ENCODE measurements at regions of chr3 and their contacts with region 1.

Region 1: DNA sequence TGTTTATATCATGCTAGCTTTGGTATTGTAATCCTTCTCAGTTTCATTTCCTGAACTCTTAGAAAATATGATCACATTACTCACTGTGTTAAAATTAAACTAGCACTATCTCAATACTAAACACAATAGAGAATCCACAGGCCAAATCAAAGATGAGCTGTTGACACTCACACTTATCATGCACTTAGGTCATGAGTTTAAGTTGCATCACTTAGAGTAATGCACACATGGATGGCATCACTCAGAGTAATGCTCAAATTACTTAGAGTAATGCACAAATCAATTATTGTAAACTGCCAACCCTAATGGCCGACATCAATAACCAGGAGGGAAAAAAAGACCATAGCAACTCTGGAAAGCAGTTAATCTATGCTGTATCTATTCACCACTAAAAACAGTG is 40.0 kb upstream of the MCF2L2 start:
- DNase-seq: no peak
- H3K4me3 ChIP-seq: no peak overlapping the region
- H3K4me3 Mint-ChIP-seq: no peak overlapping the region
- H3K27ac Mint-ChIP-seq: no peak overlapping the region
- H3K4me1 ChIP-seq: peaks cover 21% of the 10 kb centered on the region; the same call in 1 of the 2 replicates
- H3K4me1 Mint-ChIP-seq: peaks cover 14% of the 10 kb centered on the region
- H3K27me3 ChIP-seq: no peaks in the 10 kb centered on the region
- H3K27me3 Mint-ChIP-seq: no peaks in the 10 kb centered on the region
- CTCF ChIP-seq: no peak

Region 2: GRCh38 chr3:183447206-183448001 is 21.0 kb before region 1 on chr3:
- CTCF ChIA-PET with region 1: no interaction called
- POLR2A ChIA-PET with region 1: no interaction called
- intact Hi-C with region 1: loop called (anchors 1 kb)
- DNase-seq: peak; percentile 94 to 95
- H3K4me3 ChIP-seq: peak overlapping the region; percentile 95
- H3K4me3 Mint-ChIP-seq: peak overlapping the region; percentile 82
- H3K27ac Mint-ChIP-seq: peak overlapping the region; percentile 69
- H3K4me1 ChIP-seq: no peaks in the 10 kb centered on the region
- H3K4me1 Mint-ChIP-seq: peaks cover 13% of the 10 kb centered on the region
- H3K27me3 ChIP-seq: no peaks in the 10 kb centered on the region
- H3K27me3 Mint-ChIP-seq: no peaks in the 10 kb centered on the region
- CTCF ChIP-seq: peak in 1 of 2 experiments; percentile 8

Region 3: DNA sequence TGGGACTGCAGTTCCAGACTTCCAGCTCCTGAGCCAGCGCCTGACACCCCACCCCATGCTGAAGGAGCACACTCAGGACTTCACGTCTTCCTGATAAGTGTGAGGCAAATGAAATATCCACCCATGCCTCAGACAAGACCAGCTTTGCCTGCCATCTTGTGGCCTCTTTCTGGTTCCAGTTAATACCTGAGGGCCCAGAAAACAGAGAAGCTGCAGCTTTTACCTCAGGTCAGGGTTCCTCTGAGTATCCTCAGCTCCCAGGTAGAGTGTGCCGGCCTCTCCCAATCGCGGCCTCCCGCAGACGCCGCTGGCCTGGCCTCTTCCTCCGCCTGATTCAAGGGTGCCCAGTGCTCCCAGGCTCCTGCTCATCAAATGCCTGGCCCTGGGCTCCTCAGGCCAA is 92.2 kb after region 1 on chr3:
- CTCF ChIA-PET with region 1: interaction called, 3 read pairs
- POLR2A ChIA-PET with region 1: no interaction called
- intact Hi-C with region 1: loop called (anchors 1 kb)
- DNase-seq: peak; percentile 51 to 58
- H3K4me3 ChIP-seq: no peak overlapping the region
- H3K4me3 Mint-ChIP-seq: no peak overlapping the region
- H3K27ac Mint-ChIP-seq: no peak overlapping the region
- H3K4me1 ChIP-seq: peaks cover 9% of the 10 kb centered on the region; the same call in 1 of the 2 replicates
- H3K4me1 Mint-ChIP-seq: peaks cover 9% of the 10 kb centered on the region
- H3K27me3 ChIP-seq: no peaks in the 10 kb centered on the region
- H3K27me3 Mint-ChIP-seq: no peaks in the 10 kb centered on the region
- CTCF ChIP-seq: peak; percentile 39 to 47

Region 4: DNA sequence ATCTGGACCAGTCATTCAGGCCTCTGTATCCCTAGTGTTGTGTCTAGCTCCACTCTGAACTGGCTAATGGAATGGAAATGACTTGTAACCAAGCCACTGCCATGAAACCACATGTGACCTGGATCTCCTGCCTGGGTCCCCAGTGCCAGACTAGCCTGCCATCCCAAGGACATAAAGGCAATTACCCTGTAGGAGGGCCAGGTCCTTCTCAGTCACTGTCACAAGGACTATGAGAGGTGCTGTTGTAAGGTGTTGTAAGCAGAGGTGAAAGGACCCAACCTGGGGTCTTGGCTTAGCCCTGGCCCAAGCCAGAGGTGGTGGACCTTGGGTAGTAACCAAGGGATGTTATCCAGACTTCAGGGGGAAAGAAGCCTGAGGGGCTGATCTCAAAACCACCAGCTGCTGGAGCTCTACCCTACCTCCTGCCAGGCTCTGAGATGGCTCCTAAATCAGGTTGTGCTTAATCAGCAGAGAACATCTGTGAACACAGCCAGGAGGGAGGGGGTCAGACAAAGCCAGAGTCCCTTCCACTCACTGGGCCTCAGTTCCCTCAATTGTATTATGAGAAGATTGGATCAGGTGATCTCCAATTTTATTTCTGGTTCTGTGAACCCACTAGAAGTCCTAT is 151.3 kb after region 1 on chr3:
- CTCF ChIA-PET with region 1: no interaction called
- POLR2A ChIA-PET with region 1: no interaction called
- intact Hi-C with region 1: no loop called
- DNase-seq: no peak
- H3K4me3 ChIP-seq: no peak overlapping the region
- H3K4me3 Mint-ChIP-seq: no peak overlapping the region
- H3K27ac Mint-ChIP-seq: no peak overlapping the region
- H3K4me1 ChIP-seq: peaks cover 4% of the 10 kb centered on the region; the same call in 1 of the 2 replicates
- H3K4me1 Mint-ChIP-seq: no peaks in the 10 kb centered on the region
- H3K27me3 ChIP-seq: no peaks in the 10 kb centered on the region
- H3K27me3 Mint-ChIP-seq: no peaks in the 10 kb centered on the region
- CTCF ChIP-seq: no peak

Region 5: GRCh38 chr3:183635431-183636220 is 167.2 kb after region 1 on chr3 and contains the start of gene KLHL24:
- CTCF ChIA-PET with region 1: no interaction called
- POLR2A ChIA-PET with region 1: no interaction called
- intact Hi-C with region 1: loop called (anchors 5 kb)
- DNase-seq: peak; percentile 92 to 93
- H3K4me3 ChIP-seq: peak within 1 kb of the TSS; percentile 100
- H3K4me3 Mint-ChIP-seq: peak within 1 kb of the TSS; percentile 82
- H3K27ac Mint-ChIP-seq: peak within 1 kb of the TSS; percentile 84
- H3K4me1 ChIP-seq: no peaks in the 10 kb centered on the region
- H3K4me1 Mint-ChIP-seq: no peaks in the 10 kb centered on the region
- H3K27me3 ChIP-seq: no peaks in the 10 kb centered on the region
- H3K27me3 Mint-ChIP-seq: no peaks in the 10 kb centered on the region
- CTCF ChIP-seq: no peak
- total RNA-seq, gene KLHL24: 16.8 and 17.6 TPM in 2 replicates

Region 6: DNA sequence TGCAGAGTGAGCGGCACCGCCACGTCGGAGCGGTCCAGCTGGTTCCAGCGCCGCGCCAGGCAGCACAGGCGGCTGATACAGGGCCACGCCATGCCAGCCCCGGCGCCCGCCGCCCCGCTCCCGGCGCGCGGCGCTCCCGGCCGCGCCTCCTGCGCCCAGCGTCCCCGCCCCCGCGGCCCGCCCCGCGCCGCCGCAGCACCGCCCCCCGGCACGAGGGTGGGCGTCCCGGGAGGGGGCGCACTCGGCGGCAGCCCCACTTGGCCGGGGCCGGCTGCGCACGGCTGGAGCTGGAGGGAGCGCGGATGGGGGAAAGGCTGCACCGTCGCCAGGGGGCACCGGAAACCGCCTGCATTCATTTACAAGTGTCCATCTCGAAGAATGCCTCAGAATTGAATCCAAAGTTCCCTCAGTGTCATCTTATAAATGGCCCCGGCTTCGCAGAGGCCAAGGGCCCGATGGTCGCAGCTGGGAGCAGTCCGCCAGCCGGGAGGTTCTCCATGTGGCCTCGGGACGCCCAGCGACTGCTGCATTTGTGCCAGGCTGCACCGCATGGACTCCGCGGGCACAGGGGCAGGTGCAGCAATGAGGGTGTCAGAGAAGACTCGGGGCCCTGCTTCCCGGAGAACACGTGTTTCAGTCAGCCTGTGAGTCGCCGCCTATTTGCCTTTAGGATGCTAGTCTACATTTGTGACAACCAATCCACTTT is 357.2 kb after region 1 on chr3 and contains the start of gene MAP6D1:
- CTCF ChIA-PET with region 1: interaction called, 3 read pairs
- POLR2A ChIA-PET with region 1: no interaction called
- intact Hi-C with region 1: loop called (anchors 1 kb)
- DNase-seq: peak; percentile 72 to 87
- H3K4me3 ChIP-seq: peak within 1 kb of the TSS; percentile 52
- H3K4me3 Mint-ChIP-seq: peak within 1 kb of the TSS; percentile 83
- H3K27ac Mint-ChIP-seq: peak within 1 kb of the TSS; percentile 57
- H3K4me1 ChIP-seq: peaks cover 8% of the 10 kb centered on the region
- H3K4me1 Mint-ChIP-seq: peaks cover 8% of the 10 kb centered on the region
- H3K27me3 ChIP-seq: no peaks in the 10 kb centered on the region
- H3K27me3 Mint-ChIP-seq: no peaks in the 10 kb centered on the region
- CTCF ChIP-seq: peak; percentile 48 to 53
- total RNA-seq, gene MAP6D1: 2.9 and 5.1 TPM in 2 replicates

Measured in Caco-2 (cell line).